PC-3 (cell line): ENCODE measurements at regions of chr4 and their contacts with region 1.

Region 1: DNA sequence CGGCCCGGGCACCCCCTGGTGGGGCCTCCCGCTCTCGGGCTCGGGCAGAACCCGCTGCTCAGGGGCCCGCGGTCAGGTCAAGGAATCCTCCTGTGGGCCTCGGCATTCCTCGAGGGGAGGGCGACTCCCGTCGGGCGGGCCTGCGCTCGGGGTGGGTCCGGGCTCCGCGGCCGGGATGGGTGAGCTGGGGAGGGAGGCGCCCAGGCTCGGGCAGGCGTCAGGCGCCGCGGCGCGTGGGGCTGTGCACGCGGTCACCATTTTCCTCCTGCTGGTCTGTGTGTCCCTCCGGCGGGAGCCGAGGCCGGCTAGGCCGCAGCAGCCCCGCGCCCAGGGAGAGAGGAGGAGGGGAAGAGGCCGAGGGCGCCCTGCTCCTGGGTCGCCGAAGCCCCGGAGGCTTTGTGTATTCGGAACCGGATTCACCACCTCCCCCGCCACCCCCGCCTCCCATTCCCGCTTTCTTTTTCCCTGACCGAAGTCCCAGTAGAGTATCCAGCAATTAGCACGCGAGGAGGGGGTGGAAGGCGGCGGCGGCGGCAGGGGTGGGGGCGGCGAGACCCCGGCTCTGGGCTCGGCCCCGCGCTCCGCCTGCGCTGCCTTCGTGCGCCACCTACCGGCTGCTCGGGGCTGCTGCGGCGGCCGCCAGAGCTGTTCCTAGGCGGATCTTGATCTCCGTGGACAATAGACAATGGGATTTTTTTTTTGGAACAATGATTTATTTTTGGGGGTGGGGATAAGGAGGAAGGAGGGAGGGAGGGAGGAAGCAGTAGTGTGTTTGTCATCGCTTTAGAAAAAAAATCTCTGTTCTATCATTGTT is 99.0 kb upstream of the MAML3 start:
- DNase-seq: peak; percentile 78
- ATAC-seq: peak; percentile 73
- H3K4me3 ChIP-seq: peak overlapping the region; percentile 59
- H3K27ac ChIP-seq: peak overlapping the region; percentile 77
- H3K4me1 ChIP-seq: peaks cover 59% of the 10 kb centered on the region
- H3K27me3 ChIP-seq: no peaks in the 10 kb centered on the region
- CTCF ChIP-seq: peak; percentile 79

Region 2: GRCh38 chr4:139665690-139666529 is 587.0 kb before region 1 on chr4 and contains the start of gene MGST2:
- CTCF ChIA-PET with region 1: no interaction called
- POLR2A ChIA-PET with region 1: no interaction called
- intact Hi-C with region 1: no loop called
- DNase-seq: peak; percentile 58
- ATAC-seq: peak; percentile 82
- H3K4me3 ChIP-seq: peak within 1 kb of the TSS; percentile 70
- H3K27ac ChIP-seq: peak within 1 kb of the TSS; percentile 80
- H3K4me1 ChIP-seq: peaks cover 16% of the 10 kb centered on the region
- H3K27me3 ChIP-seq: no peaks in the 10 kb centered on the region
- CTCF ChIP-seq: no peak
- total RNA-seq, gene MGST2: 31.6 and 39.0 TPM in 2 replicates

Region 3: DNA sequence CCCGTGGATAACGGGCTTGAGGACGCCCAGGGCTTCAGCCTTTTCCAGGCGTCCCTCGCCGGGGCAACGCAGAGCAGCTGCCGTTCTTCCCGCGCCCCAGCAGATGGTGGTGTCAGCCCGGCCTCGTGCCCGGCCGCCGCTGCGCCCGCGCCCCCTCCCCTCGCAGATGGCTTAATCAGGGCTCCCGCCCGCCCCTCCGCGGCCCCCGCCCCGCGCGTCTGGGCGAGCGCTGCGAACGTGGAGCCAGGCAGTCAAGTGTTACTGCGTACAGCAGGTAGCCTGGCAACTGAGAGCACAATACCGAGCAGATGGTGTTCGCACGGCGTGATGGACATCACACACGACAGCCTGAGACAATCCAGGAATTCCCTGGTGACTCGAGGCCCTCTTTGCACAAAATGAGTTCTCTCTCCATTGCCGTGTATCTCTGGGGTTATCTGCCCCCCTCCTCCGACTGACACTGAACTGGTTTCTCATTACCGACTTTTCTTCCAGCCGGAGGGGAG is 518.0 kb before region 1 on chr4:
- CTCF ChIA-PET with region 1: no interaction called
- POLR2A ChIA-PET with region 1: no interaction called
- intact Hi-C with region 1: loop called (anchors 2 kb)
- DNase-seq: peak; percentile 51
- ATAC-seq: peak; percentile 89
- H3K4me3 ChIP-seq: peak overlapping the region; percentile 60
- H3K27ac ChIP-seq: no peak overlapping the region
- H3K4me1 ChIP-seq: peaks cover 4% of the 10 kb centered on the region; the same call in 1 of the 2 replicates
- H3K27me3 ChIP-seq: no peaks in the 10 kb centered on the region
- CTCF ChIP-seq: peak; percentile 68

Region 4: DNA sequence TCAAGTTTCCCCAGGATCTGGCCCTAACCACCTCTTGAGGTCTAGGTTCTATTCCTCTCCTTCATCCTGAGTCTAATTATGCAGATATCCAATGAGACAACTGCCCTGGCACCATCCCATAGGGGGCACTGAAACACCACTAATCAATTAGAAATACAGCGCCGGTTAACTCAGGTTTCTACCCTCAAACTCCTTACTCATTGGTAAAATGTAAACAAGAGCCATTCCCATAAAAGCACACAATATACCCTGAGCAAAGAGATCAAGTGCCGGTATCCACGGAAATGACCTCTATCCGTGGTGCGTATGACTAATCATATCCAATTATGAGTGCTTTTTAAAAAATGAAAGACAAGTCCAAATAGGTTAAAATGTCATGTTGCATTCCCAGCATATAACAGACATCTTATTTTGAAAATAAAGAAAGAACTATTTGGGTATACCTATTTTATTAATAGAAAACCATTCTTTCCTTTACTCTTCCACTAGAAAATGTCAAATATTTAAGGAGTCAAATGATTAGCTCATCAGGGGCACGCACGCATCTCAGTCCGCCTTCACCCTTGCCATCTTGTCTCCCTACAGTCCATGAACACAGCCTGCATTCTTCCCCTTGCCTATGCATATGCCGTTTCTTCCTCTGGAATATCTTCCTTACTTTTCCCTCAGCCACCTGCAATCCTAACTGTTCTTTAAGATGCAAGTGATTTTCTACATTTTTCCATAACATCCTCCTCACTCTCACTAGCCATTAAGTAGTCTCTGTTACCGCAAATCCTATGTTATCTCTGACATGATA is 240.1 kb before region 1 on chr4:
- CTCF ChIA-PET with region 1: interaction called, 3 read pairs
- POLR2A ChIA-PET with region 1: no interaction called
- intact Hi-C with region 1: loop called (anchors 1 kb)
- DNase-seq: peak; percentile 93
- ATAC-seq: peak; percentile 99
- H3K4me3 ChIP-seq: 0 out of 2 replicates have a peak overlapping the region, but pooled peaks have one; percentile 13
- H3K27ac ChIP-seq: peak overlapping the region; percentile 82
- H3K4me1 ChIP-seq: peaks cover 22% of the 10 kb centered on the region
- H3K27me3 ChIP-seq: no peaks in the 10 kb centered on the region
- CTCF ChIP-seq: peak; percentile 83

Region 5: GRCh38 chr4:140296335-140297220 is 43.6 kb after region 1 on chr4:
- CTCF ChIA-PET with region 1: no interaction called
- POLR2A ChIA-PET with region 1: no interaction called
- intact Hi-C with region 1: loop called (anchors 1 kb)
- DNase-seq: peak; percentile 56
- ATAC-seq: peak; percentile 56
- H3K4me3 ChIP-seq: peak overlapping the region; percentile 54
- H3K27ac ChIP-seq: peak overlapping the region; percentile 11
- H3K4me1 ChIP-seq: peaks cover 31% of the 10 kb centered on the region
- H3K27me3 ChIP-seq: no peaks in the 10 kb centered on the region
- CTCF ChIP-seq: no peak